ENCODE measurements at regions of chr9 and their contacts with region 1.

Region 1: DNA sequence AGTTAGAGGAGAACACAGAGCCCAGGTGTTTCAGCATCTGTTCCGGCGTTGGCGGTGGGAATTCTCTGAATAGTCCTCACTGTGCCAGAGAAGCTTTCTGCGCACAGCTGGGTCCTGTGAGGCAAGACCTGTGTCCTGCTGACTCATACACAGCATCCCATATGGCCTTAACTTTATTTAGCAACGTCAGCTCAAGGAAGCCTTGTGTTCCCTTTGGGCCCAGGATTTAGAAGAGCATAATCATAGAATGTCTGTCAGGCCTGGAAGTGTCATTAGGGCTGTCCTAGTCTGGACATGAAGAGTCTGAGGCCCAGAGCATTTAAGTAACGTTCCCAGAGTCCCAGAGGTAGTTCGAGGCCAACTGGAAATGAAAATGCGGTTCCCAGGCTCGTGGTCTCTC is 188.6 kb upstream of the DMRT1 start:
- DNase-seq: peak; percentile 78 to 79
- ATAC-seq: peak; percentile 90 to 95
- H3K4me3 ChIP-seq: no peak overlapping the region
- H3K27ac ChIP-seq: peak overlapping the region; percentile 40 to 78 (median 42)
- H3K4me1 ChIP-seq: peaks cover 24 to 56% of the 10 kb centered on the region in 2 donors
- H3K27me3 ChIP-seq: no peaks in the 10 kb centered on the region
- CTCF ChIP-seq: no peak
- POLR2A ChIP-seq: no peak

Region 2: DNA sequence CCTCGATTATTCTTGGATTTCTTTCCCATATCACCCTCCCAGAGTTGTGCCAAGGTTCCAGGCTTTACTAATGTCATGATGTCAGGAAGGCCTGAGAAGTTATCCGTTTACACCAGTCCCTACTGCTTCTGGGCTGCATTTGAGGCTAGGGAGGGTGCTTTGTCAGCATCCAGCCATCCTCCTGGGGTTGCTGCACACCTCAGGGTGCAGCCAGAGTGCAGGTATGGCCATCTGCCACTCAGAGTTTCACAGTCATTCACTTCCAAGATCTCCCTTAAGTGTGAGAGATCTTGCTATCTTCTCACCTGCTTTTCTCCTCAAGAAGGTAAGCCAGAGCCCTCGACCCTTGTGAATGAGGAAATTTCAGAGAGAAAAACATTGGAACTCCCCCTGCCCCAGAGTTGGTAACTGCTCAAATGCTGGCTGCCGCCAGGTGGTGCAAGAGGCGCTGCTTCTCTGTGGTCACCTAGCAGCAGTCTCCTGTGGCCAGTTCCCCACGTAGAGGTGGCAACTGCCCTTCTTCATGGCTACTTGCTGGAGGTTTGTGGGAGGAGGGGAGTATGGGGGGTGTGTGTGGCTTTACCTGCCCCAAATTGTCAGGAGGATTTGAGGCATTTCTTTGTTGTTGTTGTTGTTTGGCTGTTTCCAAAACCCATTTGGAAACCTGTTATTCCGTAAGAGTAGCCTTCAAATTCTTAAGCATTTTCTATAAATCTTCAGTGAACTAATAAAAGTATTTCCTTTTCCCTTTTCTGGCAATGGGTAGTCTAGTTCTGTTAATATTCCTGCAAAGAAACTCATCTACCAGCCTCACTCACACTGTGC is 71.0 kb before region 1 on chr9:
- in situ Hi-C with region 1: no loop called
- intact Hi-C with region 1: no loop called
- DNase-seq: no peak
- ATAC-seq: no peak
- H3K4me3 ChIP-seq: no peak overlapping the region
- H3K27ac ChIP-seq: no peak overlapping the region
- H3K4me1 ChIP-seq: peaks cover 0 to 5% of the 10 kb centered on the region in 2 donors
- H3K27me3 ChIP-seq: no peaks in the 10 kb centered on the region
- CTCF ChIP-seq: no peak
- POLR2A ChIP-seq: no peak

Region 3: DNA sequence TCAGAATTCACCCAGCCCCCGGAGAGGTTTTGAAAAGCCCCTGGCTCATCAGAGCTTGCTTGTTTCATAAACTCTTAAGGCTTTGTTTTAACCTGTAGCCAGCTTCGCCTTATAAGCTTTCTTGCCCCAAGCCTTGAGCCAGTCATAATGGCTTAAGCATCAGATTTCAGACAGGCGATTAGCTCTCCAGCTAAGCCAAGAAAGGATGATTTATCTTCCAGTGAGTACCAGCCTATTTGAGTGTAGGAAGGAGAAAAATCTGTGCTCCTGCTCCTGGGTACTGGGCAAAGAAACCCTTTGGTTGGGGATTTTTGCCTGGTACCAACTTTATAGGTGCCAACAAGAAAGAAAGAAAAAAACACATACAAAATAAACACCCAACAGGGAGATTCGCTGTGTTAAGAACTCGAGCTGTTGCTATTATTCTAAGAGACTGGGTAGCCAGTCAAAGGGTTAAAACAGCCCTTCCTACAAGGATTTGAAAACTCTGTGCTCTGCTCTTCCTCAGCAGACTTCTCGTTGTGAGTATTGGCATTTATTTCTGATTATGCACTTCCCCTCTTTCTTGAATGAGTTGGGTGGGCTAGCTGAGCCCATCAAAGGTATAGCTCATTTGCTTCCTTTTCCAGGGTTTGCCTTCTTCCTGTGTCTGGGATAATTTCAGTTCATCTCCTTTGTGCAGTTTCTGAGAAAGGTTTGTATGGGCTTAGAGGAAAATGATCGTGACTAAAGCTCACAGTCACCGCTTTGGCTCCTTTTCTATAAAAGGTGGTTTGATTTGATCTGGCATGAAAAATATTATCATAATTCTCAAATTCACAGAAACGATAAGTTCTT is 31.4 kb after region 1 on chr9:
- in situ Hi-C with region 1: no loop called
- intact Hi-C with region 1: loop called (anchors 2 kb)
- DNase-seq: peak; percentile 31 to 32
- ATAC-seq: peak; percentile 97 to 98
- H3K4me3 ChIP-seq: no peak overlapping the region
- H3K27ac ChIP-seq: peak overlapping the region; percentile 46 to 72 (median 54)
- H3K4me1 ChIP-seq: peaks cover 40 to 51% of the 10 kb centered on the region in 2 donors
- H3K27me3 ChIP-seq: no peaks in the 10 kb centered on the region
- CTCF ChIP-seq: no peak
- POLR2A ChIP-seq: no peak

Measured in gastrocnemius medialis (tissue), 4 donors.